Pancreas (tissue), 10 donors: ENCODE measurements at regions of chr13 and their contacts with region 1.

Region 1: GRCh38 chr13:48580185-48580803 is 47.4 kb upstream of the RCBTB2 start:
- DNase-seq: peak in 5 of 6 donors; percentile 52 to 76 (median 62)
- ATAC-seq: peak; percentile 56 to 87 (median 84)
- H3K4me3 ChIP-seq: no peak overlapping the region
- H3K27ac ChIP-seq: no peak overlapping the region
- H3K4me1 ChIP-seq: peaks cover 0 to 17% (median 10%) of the 10 kb centered on the region in 3 donors
- H3K27me3 ChIP-seq: no peaks in the 10 kb centered on the region
- CTCF ChIP-seq: peak; percentile 41 to 63 (median 54)

Region 2: DNA sequence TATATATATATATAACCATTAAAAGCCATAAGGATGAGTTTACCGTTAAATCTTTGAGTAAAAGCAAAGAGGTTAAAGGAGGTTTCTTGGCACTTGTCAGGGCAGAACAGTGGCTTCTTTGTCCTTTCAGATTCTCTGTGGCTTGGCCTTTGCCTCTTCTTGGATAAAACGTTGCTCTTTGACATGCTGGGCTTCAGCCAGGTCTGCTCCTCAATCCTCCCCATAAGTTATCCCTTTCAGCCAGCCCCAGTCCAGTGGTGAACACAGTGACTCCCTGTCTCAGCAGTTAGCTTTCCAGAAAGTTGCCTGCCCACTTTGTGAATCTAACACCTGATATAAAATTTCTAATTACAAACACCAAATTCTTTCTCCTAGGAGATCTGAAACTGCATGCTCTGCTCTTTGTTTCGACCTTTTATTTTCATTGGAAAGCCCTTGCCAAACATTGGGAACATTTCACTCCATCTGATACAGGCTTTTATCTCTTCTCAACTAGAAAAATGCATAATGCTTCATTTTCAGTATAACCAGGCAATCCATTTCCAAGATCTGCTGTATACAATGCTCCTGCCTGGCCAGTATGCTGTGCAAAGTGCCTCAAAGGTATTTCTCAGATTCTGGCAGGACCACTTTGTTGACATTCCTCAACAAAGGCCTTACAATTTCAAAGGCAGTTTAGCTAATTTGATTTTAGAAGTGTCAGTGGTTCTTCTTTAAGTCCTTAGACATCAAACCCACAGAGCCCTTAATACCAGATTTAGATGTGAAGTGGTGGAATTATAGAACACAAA is 469.2 kb before region 1 on chr13:
- intact Hi-C with region 1: loop called in 1 of 3 experiments (anchors 10 kb)
- DNase-seq: peak in 2 of 6 donors; percentile 9 to 14
- ATAC-seq: peak in 3 of 4 donors; percentile 18 to 42 (median 39)
- H3K4me3 ChIP-seq: no peak overlapping the region
- H3K27ac ChIP-seq: peak overlapping the region in 2 of 4 donors; percentile 5 to 30
- H3K4me1 ChIP-seq: no peaks in the 10 kb centered on the region
- H3K27me3 ChIP-seq: no peaks in the 10 kb centered on the region
- CTCF ChIP-seq: no peak

Region 3: GRCh38 chr13:48131533-48131932 is 448.8 kb before region 1 on chr13:
- intact Hi-C with region 1: loop called in 1 of 3 experiments (anchors 10 kb)
- DNase-seq: no peak
- ATAC-seq: no peak
- H3K4me3 ChIP-seq: no peak overlapping the region
- H3K27ac ChIP-seq: no peak overlapping the region
- H3K4me1 ChIP-seq: no peaks in the 10 kb centered on the region
- H3K27me3 ChIP-seq: no peaks in the 10 kb centered on the region
- CTCF ChIP-seq: no peak

Region 4: GRCh38 chr13:48334534-48335127 is 245.7 kb before region 1 on chr13:
- intact Hi-C with region 1: loop called in 1 of 3 experiments (anchors 10 kb)
- DNase-seq: no peak
- ATAC-seq: peak in 3 of 4 donors; percentile 71 to 78 (median 78)
- H3K4me3 ChIP-seq: no peak overlapping the region
- H3K27ac ChIP-seq: no peak overlapping the region
- H3K4me1 ChIP-seq: peaks cover 0 to 5% (median 0%) of the 10 kb centered on the region in 3 donors
- H3K27me3 ChIP-seq: no peaks in the 10 kb centered on the region
- CTCF ChIP-seq: peak in 2 of 4 donors; percentile 30 to 32

Region 5: GRCh38 chr13:48346583-48346982 is 233.7 kb before region 1 on chr13:
- intact Hi-C with region 1: loop called in 1 of 3 experiments (anchors 10 kb)
- DNase-seq: no peak
- ATAC-seq: no peak
- H3K4me3 ChIP-seq: no peak overlapping the region
- H3K27ac ChIP-seq: no peak overlapping the region
- H3K4me1 ChIP-seq: no peaks in the 10 kb centered on the region
- H3K27me3 ChIP-seq: no peaks in the 10 kb centered on the region
- CTCF ChIP-seq: no peak